Endothelial cell of umbilical vein (primary cell): ENCODE measurements at regions of chr14 and their contacts with region 1.

Region 1: DNA sequence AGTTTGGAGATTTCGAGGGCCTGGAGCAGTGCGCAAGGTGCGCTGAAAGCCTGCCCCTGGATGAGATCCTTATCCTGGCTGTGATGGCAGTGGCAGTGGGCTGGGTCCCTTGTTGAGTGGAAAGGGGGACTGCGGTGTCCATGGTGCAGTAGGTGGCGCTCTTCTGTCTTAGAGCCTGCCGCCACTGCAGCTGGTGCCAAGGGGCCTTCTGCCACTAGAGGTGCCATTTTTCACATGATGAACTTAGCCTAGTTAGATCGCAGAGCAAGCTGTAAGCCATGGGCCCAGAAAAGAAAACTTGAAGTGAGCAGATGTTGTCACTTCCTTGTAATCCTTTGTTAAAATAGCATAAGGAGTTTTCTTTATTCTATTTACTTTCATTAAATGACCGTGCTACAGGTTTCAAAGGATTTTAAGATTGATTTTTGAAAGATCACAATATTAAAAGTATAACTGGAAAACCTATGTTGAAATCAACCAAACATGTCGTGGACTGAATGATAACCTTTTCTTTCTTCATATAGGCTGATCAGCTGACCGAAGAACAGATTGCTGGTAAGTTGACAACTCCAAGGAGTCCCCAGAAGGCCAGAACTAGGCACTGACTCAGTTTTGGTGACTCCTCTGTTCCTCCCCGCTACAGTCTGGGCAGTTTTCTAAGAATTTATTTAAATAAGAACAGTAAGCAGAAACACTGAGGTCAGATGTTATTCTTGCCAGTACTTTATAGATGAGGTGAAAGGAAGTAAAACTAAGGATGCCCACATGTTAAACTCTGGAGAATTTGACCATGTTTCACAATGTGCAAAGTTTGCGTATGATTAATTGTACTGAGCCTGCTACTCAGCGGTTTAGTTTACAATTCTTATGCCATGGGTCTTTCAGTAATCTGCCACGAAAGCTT is 3.0 kb downstream of the CALM1 start:
- DNase-seq: peak; percentile 95
- H3K4me3 ChIP-seq: peak overlapping the region in 1 of 3 experiments; percentile 78
- H3K27ac ChIP-seq: peak overlapping the region; percentile 33
- H3K4me1 ChIP-seq: peaks cover 35% of the 10 kb centered on the region
- H3K27me3 ChIP-seq: no peaks in the 10 kb centered on the region
- CTCF ChIP-seq: peak; percentile 100
- POLR2A ChIP-seq: no peak

Region 2: GRCh38 chr14:90301668-90302090 is 98.1 kb before region 1 on chr14:
- CTCF ChIA-PET with region 1: interaction called, 15 read pairs
- POLR2A ChIA-PET with region 1: interaction called, 17 read pairs
- dilution Hi-C with region 1: no loop called
- intact Hi-C with region 1: loop called (anchors 1 kb)
- DNase-seq: peak; percentile 76
- H3K4me3 ChIP-seq: no peak overlapping the region
- H3K27ac ChIP-seq: no peak overlapping the region
- H3K4me1 ChIP-seq: no peaks in the 10 kb centered on the region
- H3K27me3 ChIP-seq: no peaks in the 10 kb centered on the region
- CTCF ChIP-seq: peak; percentile 22 to 41
- POLR2A ChIP-seq: no peak

Region 3: DNA sequence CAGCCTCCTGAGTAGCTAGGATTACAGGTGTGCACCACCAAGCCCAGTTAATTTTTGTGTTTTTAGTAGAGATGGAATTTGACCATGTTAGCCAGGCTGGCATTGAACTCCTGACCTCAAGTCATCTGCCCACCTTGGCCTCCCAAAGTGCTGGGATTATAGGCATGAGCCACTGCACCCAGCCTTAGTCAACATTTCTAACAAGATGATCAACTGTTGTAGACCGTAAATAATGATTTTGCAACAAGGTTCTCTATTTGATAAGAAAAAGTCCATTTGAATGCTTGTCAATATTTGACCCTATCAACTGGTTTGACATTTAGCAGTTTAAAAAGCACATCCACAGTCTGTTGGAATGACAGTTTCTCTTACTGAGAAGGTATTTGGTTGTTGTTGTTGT is 42.9 kb before region 1 on chr14:
- CTCF ChIA-PET with region 1: no interaction called
- POLR2A ChIA-PET with region 1: no interaction called
- dilution Hi-C with region 1: no loop called
- intact Hi-C with region 1: no loop called
- DNase-seq: no peak
- H3K4me3 ChIP-seq: no peak overlapping the region
- H3K27ac ChIP-seq: no peak overlapping the region
- H3K4me1 ChIP-seq: no peaks in the 10 kb centered on the region
- H3K27me3 ChIP-seq: peaks cover 5 to 7% of the 10 kb centered on the region in 2 experiments
- CTCF ChIP-seq: no peak
- POLR2A ChIP-seq: no peak

Region 4: DNA sequence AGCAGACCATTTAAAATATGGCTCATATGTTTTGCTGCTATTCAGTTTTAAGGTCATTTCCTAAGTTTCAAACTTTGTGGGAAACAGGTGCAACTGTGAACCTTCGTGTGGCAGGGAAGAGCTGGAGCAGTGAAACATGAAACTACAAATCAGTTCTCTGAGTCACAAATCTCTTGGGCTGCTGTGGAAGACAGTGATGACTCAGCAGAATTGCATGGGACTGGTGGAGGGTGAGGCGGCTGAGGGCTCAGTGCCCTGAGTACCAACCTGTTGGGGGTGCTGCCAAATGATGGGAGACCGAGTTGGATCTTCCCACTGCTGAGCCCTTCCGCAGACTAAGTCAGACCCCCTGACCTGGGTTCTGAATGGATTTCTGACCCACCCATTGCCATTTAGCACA is 11.4 kb before region 1 on chr14:
- CTCF ChIA-PET with region 1: interaction called, 13 read pairs
- POLR2A ChIA-PET with region 1: interaction called, 49 read pairs
- dilution Hi-C with region 1: no loop called
- intact Hi-C with region 1: loop called (anchors 1 kb)
- DNase-seq: peak; percentile 26
- H3K4me3 ChIP-seq: no peak overlapping the region
- H3K27ac ChIP-seq: no peak overlapping the region
- H3K4me1 ChIP-seq: peaks cover 13% of the 10 kb centered on the region
- H3K27me3 ChIP-seq: no peaks in the 10 kb centered on the region
- CTCF ChIP-seq: no peak
- POLR2A ChIP-seq: no peak

Region 5: GRCh38 chr14:90454041-90455000 is 54.5 kb after region 1 on chr14:
- CTCF ChIA-PET with region 1: interaction called, 13 read pairs
- POLR2A ChIA-PET with region 1: interaction called, 7 read pairs
- dilution Hi-C with region 1: no loop called
- intact Hi-C with region 1: loop called (anchors 1 kb)
- DNase-seq: peak; percentile 95
- H3K4me3 ChIP-seq: peak overlapping the region in 1 of 3 experiments; percentile 12
- H3K27ac ChIP-seq: no peak overlapping the region
- H3K4me1 ChIP-seq: peaks cover 3% of the 10 kb centered on the region
- H3K27me3 ChIP-seq: peaks cover 0 to 1% of the 10 kb centered on the region in 2 experiments
- CTCF ChIP-seq: peak in 1 of 2 donors; percentile 4
- POLR2A ChIP-seq: peak; percentile 27

Region 6: DNA sequence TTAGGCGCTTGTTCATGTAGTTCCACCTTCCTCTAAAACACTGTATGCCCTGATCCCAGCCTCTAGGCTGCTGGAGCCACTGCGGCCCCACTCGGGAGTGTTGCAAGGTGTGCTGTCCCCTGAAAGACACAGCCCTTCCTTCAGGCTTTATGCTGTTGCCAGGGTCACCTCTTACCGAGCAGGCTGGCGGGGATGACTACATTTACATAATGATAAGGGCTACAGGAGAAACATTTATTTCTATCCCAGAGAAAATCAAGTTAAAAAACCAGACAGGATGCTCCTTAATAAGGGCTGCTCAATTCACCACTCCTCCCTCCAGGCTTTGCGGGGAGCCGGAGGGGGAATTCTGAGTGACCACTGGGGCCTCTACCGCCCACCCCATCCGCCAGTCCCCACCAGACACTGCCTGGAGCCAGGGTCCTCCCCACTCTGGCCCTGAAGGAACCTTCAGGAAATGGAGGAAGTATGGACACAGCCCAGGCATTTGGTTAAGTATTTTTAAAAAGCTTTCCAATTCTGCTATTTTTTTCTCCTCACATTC is 215.8 kb after region 1 on chr14:
- CTCF ChIA-PET with region 1: interaction called, 6 read pairs
- POLR2A ChIA-PET with region 1: interaction called, 3 read pairs
- dilution Hi-C with region 1: no loop called
- intact Hi-C with region 1: loop called (anchors 1 kb)
- DNase-seq: peak; percentile 78
- H3K4me3 ChIP-seq: peak overlapping the region in 2 of 3 experiments; percentile 19 to 38
- H3K27ac ChIP-seq: peak overlapping the region; percentile 93
- H3K4me1 ChIP-seq: peaks cover 71% of the 10 kb centered on the region
- H3K27me3 ChIP-seq: no peaks in the 10 kb centered on the region
- CTCF ChIP-seq: no peak
- POLR2A ChIP-seq: no peak

Region 7: DNA sequence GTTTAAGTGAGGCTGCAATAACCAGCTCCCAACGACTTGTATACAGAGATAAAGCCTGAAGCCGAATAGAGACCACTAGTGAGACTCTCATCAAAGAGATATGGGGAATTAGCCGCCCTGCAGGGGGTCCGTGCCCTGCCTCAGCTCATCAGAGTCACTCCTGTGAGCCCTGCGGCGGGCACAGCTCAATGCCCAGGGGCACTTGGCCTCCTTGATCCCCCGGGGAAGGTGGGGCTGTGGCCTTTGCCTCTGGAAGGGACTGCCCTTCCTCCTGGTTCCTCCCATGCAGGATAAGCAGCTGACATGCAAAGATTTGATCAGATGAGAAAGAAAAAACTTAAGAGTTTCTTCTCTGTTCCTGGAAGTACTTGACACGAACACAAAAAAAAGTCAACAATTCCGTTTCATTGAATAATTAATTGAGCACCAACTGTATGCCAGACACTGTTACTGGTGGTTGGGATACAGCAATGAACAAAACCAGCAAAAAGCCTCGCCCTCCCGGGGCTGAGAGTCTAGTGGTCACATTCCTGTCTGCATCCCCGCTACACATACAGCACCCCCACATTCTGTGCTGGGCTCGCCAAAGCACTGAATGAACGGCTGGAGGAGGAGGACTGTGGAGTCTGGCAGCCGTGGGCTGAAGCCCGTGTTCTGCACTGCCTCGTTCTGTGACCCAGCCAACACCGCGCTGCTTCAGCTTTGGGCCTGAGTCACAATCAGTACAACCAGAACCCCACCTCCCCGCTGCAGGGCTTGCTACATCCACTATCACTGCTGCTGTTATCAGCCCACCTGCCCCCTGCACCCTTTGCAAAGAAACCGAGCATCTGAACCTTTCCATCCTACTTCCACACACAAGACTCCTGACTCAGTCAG is 406.1 kb after region 1 on chr14:
- CTCF ChIA-PET with region 1: no interaction called
- POLR2A ChIA-PET with region 1: interaction called, 6 read pairs
- dilution Hi-C with region 1: no loop called
- intact Hi-C with region 1: loop called (anchors 5 kb)
- DNase-seq: no peak
- H3K4me3 ChIP-seq: no peak overlapping the region
- H3K27ac ChIP-seq: peak overlapping the region; percentile 17
- H3K4me1 ChIP-seq: peaks cover 52% of the 10 kb centered on the region
- H3K27me3 ChIP-seq: no peaks in the 10 kb centered on the region
- CTCF ChIP-seq: no peak
- POLR2A ChIP-seq: no peak